ENCODE measurements at regions of chr19 and their contacts with region 1.

Region 1: GRCh38 chr19:39335168-39335548 is 685 bp downstream of the GMFG start:
- DNase-seq: peak; percentile 54
- ATAC-seq: peak; percentile 20
- H3K4me3 Mint-ChIP-seq: peak overlapping the region; percentile 96
- H3K27ac Mint-ChIP-seq: peak overlapping the region; percentile 99
- H3K4me1 Mint-ChIP-seq: peaks cover 39% of the 10 kb centered on the region
- H3K27me3 Mint-ChIP-seq: no peaks in the 10 kb centered on the region

Region 2: GRCh38 chr19:39397360-39398296 is 62.5 kb after region 1 on chr19:
- POLR2A ChIA-PET with region 1: interaction called, 13 read pairs
- DNase-seq: peak; percentile 97
- ATAC-seq: peak; percentile 76
- H3K4me3 Mint-ChIP-seq: peak overlapping the region; percentile 77
- H3K27ac Mint-ChIP-seq: peak overlapping the region; percentile 91
- H3K4me1 Mint-ChIP-seq: peaks cover 41% of the 10 kb centered on the region
- H3K27me3 Mint-ChIP-seq: no peaks in the 10 kb centered on the region